ENCODE measurements at regions of chr1 and their contacts with region 1.

Region 1: DNA sequence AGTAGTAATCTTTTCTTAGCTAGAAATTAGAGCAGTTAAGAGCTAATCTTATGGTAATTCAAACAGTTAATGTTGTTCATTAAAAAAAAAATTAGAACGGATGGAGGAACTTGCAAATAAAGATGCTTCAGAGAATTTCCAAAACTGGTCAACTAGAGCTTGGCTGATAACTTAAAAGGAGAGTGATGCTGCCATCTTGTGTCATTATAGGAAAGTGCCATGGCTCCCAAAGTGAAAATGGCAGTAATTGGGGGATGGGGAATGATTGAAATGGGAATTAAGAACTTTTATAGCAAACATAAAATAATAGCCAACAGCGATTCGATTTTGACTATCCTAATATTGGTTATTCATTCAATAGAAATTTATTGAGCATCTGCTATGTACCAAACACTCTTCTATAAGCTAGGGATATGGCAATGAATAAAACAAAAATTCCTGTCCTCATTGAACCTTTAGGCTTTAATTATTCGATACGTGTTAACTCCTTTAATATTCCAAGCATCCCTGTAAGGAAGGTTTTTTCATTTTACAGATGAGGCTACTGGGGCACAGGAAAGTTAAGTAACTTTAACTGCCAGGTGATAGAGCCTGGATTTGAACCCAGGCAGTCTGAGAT is 5.7 kb upstream of the PLPP3 start:
- DNase-seq: no peak
- ATAC-seq: peak; percentile 66
- H3K4me3 Mint-ChIP-seq: no peak overlapping the region
- H3K27ac Mint-ChIP-seq: no peak overlapping the region
- H3K4me1 Mint-ChIP-seq: peaks cover 4% of the 10 kb centered on the region
- H3K27me3 Mint-ChIP-seq: peaks cover 2% of the 10 kb centered on the region
- CTCF ChIP-seq: peak; percentile 96

Region 2: GRCh38 chr1:54944610-54945544 is 1640.1 kb before region 1 on chr1:
- CTCF ChIA-PET with region 1: interaction called, 3 read pairs
- POLR2A ChIA-PET with region 1: no interaction called
- intact Hi-C with region 1: loop called (anchors 2 kb)
- DNase-seq: peak; percentile 23
- ATAC-seq: peak; percentile 54
- H3K4me3 Mint-ChIP-seq: no peak overlapping the region
- H3K27ac Mint-ChIP-seq: no peak overlapping the region
- H3K4me1 Mint-ChIP-seq: peaks cover 5% of the 10 kb centered on the region
- H3K27me3 Mint-ChIP-seq: peaks cover 3% of the 10 kb centered on the region
- CTCF ChIP-seq: no peak

Region 3: GRCh38 chr1:55277377-55278130 is 1307.5 kb before region 1 on chr1:
- CTCF ChIA-PET with region 1: interaction called, 66 read pairs
- POLR2A ChIA-PET with region 1: no interaction called
- intact Hi-C with region 1: no loop called
- DNase-seq: peak; percentile 71
- ATAC-seq: peak; percentile 90
- H3K4me3 Mint-ChIP-seq: peak overlapping the region; percentile 72
- H3K27ac Mint-ChIP-seq: peak overlapping the region; percentile 79
- H3K4me1 Mint-ChIP-seq: peaks cover 25% of the 10 kb centered on the region
- H3K27me3 Mint-ChIP-seq: no peaks in the 10 kb centered on the region
- CTCF ChIP-seq: no peak

Region 4: DNA sequence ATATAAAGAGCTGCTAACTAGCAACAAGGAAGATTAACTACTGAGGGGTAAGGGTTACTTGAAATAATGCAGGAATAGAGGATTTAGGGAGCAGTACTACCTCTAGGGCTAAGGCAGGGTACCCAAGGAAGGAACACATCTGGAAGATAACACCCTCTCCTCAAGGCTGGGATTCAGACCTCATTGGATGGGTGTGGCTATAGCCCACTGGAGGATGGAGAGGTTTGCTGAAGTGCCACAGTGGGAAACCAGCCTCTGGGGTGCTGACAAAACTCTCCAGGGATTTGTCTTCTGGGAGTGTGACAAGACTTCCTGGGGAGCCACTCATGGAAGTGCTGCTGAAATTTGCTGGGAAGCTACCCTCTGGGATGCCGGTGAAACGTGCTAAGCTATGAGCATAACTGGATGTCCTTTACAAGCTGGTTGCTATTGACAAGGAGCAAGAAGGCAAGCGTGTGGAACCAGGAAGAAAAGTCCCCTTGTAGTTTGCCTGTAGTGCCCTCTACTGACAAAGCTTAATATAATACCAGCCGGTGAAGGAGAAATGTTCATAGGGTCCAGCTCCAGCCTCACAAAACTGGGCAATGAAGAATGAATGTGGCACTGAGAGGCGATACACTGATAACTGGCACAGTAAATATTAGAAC is 1247.1 kb before region 1 on chr1:
- CTCF ChIA-PET with region 1: interaction called, 20 read pairs
- POLR2A ChIA-PET with region 1: interaction called, 4 read pairs
- intact Hi-C with region 1: loop called (anchors 1 kb)
- DNase-seq: no peak
- ATAC-seq: peak; percentile 66
- H3K4me3 Mint-ChIP-seq: no peak overlapping the region
- H3K27ac Mint-ChIP-seq: peak overlapping the region; percentile 12
- H3K4me1 Mint-ChIP-seq: peaks cover 9% of the 10 kb centered on the region
- H3K27me3 Mint-ChIP-seq: peaks cover 6% of the 10 kb centered on the region
- CTCF ChIP-seq: no peak

Region 5: GRCh38 chr1:55478742-55479141 is 1106.3 kb before region 1 on chr1:
- CTCF ChIA-PET with region 1: interaction called, 49 read pairs
- POLR2A ChIA-PET with region 1: no interaction called
- intact Hi-C with region 1: loop called (anchors 1 kb)
- DNase-seq: no peak
- ATAC-seq: no peak
- H3K4me3 Mint-ChIP-seq: no peak overlapping the region
- H3K27ac Mint-ChIP-seq: no peak overlapping the region
- H3K4me1 Mint-ChIP-seq: no peaks in the 10 kb centered on the region
- H3K27me3 Mint-ChIP-seq: peaks cover 24% of the 10 kb centered on the region
- CTCF ChIP-seq: no peak

Region 6: DNA sequence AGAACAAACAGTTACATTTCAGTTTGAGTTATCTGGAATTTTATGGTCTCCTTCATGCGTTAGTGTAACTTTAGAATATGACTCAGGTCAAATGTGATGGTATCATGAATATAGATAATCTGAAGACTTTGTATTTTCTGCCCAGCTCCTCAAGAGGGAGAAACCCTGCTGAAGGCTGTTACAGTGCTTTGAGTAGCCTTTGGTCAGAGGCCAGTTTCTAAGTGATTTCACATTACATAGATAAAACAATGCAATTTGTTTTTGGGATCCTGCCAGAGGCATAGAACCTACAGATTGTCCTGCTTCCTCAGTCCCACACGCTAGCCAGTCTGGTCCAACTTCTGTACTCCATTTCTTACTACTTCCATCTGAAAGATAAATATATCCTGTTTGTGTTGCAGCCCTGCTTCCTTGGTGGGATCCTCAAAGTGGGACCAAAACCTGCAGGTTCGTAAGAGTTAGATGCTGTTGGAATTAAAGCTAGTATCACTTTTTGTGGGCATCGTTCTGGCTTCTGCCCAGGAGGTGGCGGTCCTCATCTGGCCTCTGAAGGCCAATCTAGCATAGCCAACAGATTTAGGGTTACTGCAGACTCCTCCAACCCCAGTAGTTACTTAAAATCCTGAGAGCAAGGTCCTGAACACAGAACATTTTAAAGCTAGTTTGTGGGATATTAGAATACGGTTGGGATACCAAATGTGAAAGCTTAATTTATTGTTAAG is 724.1 kb before region 1 on chr1:
- CTCF ChIA-PET with region 1: interaction called, 7 read pairs
- POLR2A ChIA-PET with region 1: no interaction called
- intact Hi-C with region 1: loop called (anchors 5 kb)
- DNase-seq: no peak
- ATAC-seq: no peak
- H3K4me3 Mint-ChIP-seq: no peak overlapping the region
- H3K27ac Mint-ChIP-seq: no peak overlapping the region
- H3K4me1 Mint-ChIP-seq: no peaks in the 10 kb centered on the region
- H3K27me3 Mint-ChIP-seq: peaks cover 4% of the 10 kb centered on the region
- CTCF ChIP-seq: no peak

Region 7: GRCh38 chr1:56409094-56409691 is 175.8 kb before region 1 on chr1:
- CTCF ChIA-PET with region 1: interaction called, 90 read pairs
- POLR2A ChIA-PET with region 1: no interaction called
- intact Hi-C with region 1: loop called (anchors 1 kb)
- DNase-seq: peak; percentile 34
- ATAC-seq: no peak
- H3K4me3 Mint-ChIP-seq: no peak overlapping the region
- H3K27ac Mint-ChIP-seq: no peak overlapping the region
- H3K4me1 Mint-ChIP-seq: peaks cover 20% of the 10 kb centered on the region
- H3K27me3 Mint-ChIP-seq: no peaks in the 10 kb centered on the region
- CTCF ChIP-seq: no peak

Region 8: DNA sequence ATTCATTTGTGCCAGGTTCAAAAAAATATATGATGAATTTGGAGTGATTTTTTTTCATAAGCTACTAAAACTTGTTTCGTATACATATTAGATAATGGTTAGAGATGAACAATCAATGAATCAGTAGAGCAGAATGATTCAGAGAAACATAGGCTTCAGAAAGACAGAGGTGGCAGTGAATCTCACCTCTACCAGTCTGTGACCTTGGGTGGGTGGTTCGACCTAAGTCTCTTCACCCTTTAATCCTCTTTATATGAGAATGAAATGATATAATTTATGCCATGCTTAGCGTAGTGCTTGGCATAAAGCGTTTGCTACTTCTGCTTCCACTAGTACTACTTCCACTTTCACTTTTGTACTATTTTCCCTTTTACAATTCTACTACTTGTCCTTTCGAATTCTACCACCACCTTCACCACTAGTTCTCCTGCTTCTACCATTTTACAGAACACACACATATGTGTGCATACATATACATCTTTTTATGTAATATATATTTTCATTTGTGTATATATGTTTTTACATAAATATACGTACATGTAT is 189.1 kb after region 1 on chr1:
- CTCF ChIA-PET with region 1: no interaction called
- POLR2A ChIA-PET with region 1: no interaction called
- intact Hi-C with region 1: no loop called
- DNase-seq: no peak
- ATAC-seq: peak; percentile 18
- H3K4me3 Mint-ChIP-seq: peak overlapping the region; percentile 44
- H3K27ac Mint-ChIP-seq: peak overlapping the region; percentile 13
- H3K4me1 Mint-ChIP-seq: peaks cover 11% of the 10 kb centered on the region
- H3K27me3 Mint-ChIP-seq: peaks cover 1% of the 10 kb centered on the region
- CTCF ChIP-seq: no peak